Activated naive CD4-positive, alpha-beta T cell treated with anti-CD3 and anti-CD28 coated beads for 36 hours (primary cell): ENCODE measurements at regions of chr3 and their contacts with region 1.

Region 1: DNA sequence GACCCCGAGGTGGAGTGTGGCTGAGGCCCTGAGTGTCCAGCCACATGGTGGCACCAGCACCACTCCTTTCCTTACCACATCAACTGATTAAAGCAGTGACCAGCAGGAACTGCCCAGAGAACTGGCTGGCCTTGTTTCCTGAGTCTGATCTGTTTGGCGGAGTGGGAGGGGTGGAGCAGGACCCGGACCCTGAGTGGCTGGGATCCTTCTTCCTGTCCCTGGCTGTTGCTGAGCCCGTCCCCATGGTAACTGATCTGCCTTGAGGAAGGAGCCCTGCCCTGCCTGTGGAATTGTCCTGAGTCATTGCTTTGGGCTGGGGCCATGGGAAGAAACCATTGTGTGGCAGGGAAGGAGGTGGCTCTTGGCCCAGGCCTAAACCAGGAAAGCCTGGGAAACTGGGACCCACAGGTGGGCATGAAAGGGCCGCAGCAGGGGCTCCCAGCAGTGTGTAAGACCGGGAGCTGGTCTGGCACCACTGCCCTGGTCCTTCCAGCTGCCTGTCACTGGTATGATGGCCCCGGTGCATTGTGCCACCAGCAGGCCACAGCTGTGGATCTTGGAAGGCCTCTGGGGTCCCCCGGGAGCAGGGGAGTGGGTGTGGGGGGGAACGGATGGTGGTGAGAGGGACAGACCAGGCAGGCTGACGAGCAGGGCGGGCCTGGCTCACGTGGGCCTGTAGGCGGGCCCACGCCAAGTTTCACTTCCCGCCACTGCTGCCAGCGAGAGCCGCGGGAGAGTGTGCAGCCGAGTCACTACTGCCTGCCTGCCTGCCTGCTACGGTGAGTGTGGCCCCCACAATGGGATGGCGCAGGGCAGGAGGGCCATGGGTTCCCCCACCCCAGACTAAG is 19.2 kb downstream of the ATRIP start:
- DNase-seq: peak; percentile 89
- H3K4me3 Mint-ChIP-seq: peak overlapping the region; percentile 93
- H3K27ac Mint-ChIP-seq: peak overlapping the region; percentile 94
- H3K4me1 Mint-ChIP-seq: peaks cover 47% of the 10 kb centered on the region
- H3K27me3 Mint-ChIP-seq: no peaks in the 10 kb centered on the region

Region 2: DNA sequence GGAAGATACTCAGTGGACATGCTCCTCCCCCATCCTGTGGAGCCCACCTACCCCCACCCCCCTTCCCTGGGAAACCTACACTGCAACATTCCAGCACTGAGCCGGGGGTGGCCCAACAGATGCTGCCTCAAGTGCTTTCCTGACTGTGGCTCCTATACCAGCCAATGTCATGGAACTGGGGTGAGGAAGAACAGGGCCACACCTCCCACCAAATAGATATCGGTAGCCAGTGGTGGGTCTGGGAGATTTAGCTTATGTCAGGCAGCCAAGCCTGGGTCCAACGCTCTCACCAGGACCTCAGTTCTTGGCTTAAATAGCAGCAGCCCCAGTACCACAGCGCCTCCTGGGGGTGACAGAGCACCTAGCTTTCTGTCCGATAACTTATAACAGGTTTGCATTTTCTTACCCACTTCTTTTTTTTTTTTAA is 307.8 kb before region 1 on chr3:
- CTCF ChIA-PET with region 1: no interaction called
- intact Hi-C with region 1: no loop called
- DNase-seq: peak; percentile 51
- H3K4me3 Mint-ChIP-seq: no peak overlapping the region
- H3K27ac Mint-ChIP-seq: no peak overlapping the region
- H3K4me1 Mint-ChIP-seq: no peaks in the 10 kb centered on the region
- H3K27me3 Mint-ChIP-seq: no peaks in the 10 kb centered on the region

Region 3: DNA sequence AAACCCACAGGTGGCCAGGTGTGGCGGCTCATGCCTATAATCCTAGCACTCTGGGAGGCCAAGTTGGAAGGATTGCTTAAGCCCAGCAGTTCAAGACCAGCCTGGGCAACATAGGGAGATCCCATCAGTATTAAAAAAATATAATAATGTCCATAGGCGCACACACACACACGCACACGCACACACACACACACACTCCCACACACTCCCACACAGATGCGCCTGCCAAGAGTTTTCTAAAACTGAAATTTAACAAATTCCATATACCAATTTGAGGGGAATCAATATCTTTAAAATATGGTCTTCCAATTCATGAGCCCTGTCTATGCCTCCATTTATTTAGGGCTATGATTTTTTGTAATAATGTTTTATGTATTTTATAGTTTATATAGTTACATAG is 21.2 kb after region 1 on chr3:
- CTCF ChIA-PET with region 1: no interaction called
- intact Hi-C with region 1: no loop called
- DNase-seq: no peak
- H3K4me3 Mint-ChIP-seq: no peak overlapping the region
- H3K27ac Mint-ChIP-seq: no peak overlapping the region
- H3K4me1 Mint-ChIP-seq: no peaks in the 10 kb centered on the region
- H3K27me3 Mint-ChIP-seq: no peaks in the 10 kb centered on the region

Region 4: GRCh38 chr3:48507351-48508061 is 41.8 kb after region 1 on chr3:
- CTCF ChIA-PET with region 1: interaction called, 5 read pairs
- intact Hi-C with region 1: loop called (anchors 1 kb)
- DNase-seq: peak; percentile 82
- H3K4me3 Mint-ChIP-seq: peak overlapping the region; percentile 32
- H3K27ac Mint-ChIP-seq: peak overlapping the region; percentile 66
- H3K4me1 Mint-ChIP-seq: peaks cover 47% of the 10 kb centered on the region
- H3K27me3 Mint-ChIP-seq: no peaks in the 10 kb centered on the region